ENCODE measurements at regions of chr21 and their contacts with region 1.

Region 1: DNA sequence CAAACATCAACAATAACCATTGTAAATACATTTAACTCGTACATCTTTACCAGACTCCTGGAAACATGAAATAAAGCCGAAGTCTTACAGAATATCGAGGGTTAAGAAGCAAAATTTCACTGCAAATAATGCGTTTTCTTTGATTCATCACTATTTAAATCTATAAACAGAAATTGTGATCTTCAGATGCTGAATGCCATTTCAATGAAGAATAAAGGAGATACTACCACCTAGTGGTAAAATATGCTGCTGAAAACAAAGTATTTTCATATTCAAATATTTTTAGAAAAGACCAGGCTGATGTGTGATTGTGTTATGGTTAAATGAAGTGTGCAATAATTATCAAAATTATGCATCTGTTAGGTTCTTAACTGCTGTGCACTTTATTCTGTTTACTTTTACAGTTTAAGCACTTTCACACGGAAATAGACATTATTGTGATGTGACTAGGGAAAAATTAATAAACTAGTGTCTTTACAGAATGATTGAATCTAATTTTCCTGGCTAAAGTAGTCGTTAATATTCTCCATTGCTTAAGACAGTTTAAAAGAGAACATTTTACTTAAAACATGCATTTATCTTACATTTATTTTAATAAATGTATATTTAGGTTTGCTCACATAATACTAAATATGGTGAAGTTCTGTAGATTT is 1093.1 kb downstream of the MRPL39 start:
- DNase-seq: peak; percentile 57
- ATAC-seq: no peak
- H3K4me3 ChIP-seq: no peak overlapping the region
- H3K27ac ChIP-seq: no peak overlapping the region
- H3K4me1 ChIP-seq: no peaks in the 10 kb centered on the region
- H3K27me3 ChIP-seq: no peaks in the 10 kb centered on the region
- CTCF ChIP-seq: peak; percentile 88

Region 2: GRCh38 chr21:23936224-23936623 is 578.0 kb before region 1 on chr21:
- CTCF ChIA-PET with region 1: no interaction called
- POLR2A ChIA-PET with region 1: no interaction called
- intact Hi-C with region 1: loop called (anchors 10 kb)
- DNase-seq: peak; percentile 53
- ATAC-seq: peak; percentile 81
- H3K4me3 ChIP-seq: no peak overlapping the region
- H3K27ac ChIP-seq: no peak overlapping the region
- H3K4me1 ChIP-seq: no peaks in the 10 kb centered on the region; the same call in 1 of the 2 replicates
- H3K27me3 ChIP-seq: no peaks in the 10 kb centered on the region
- CTCF ChIP-seq: peak; percentile 75

Region 3: DNA sequence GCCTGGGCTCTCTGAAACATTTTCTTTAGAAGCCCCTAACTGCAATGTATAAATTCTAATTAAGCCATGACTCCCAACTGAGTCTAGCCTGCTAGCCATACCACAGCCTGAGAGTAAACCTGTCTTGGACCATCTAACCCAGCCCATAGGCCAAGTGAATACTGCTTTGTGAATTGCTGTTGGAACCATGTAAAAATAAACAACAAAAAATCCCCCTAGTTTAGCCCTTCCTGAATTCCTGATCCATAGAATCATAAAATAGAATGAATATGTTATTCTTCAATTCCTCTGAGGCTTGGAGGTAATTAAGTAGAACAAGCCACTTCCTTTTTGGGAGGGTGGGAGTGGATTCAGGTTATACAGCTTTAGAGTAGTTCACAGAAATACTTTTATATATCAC is 403.4 kb before region 1 on chr21:
- CTCF ChIA-PET with region 1: no interaction called
- POLR2A ChIA-PET with region 1: no interaction called
- intact Hi-C with region 1: loop called (anchors 1 kb)
- DNase-seq: peak; percentile 9
- ATAC-seq: peak; percentile 37; the same call in 1 of the 2 replicates
- H3K4me3 ChIP-seq: no peak overlapping the region
- H3K27ac ChIP-seq: no peak overlapping the region
- H3K4me1 ChIP-seq: no peaks in the 10 kb centered on the region
- H3K27me3 ChIP-seq: no peaks in the 10 kb centered on the region
- CTCF ChIP-seq: no peak

Region 4: DNA sequence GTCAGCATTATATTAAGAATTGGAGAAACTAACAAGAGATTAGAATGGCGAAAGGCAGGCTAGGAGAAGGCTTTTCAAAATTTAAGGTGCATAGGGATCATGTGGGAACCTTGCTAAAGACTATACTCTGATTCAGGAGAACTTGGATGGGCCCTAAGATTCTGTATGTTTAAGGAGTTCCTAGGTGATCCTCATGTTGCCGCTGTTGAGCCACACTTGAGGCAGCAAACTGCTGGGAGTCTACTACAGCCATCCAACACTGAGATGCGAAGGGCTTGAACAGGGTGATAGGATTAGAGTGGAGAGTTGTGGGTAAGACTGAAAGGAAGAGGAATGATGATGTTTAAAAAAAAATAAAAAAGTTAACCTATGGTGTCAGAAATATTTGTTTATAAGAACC is 79.9 kb after region 1 on chr21:
- CTCF ChIA-PET with region 1: no interaction called
- POLR2A ChIA-PET with region 1: no interaction called
- intact Hi-C with region 1: no loop called
- DNase-seq: no peak
- ATAC-seq: no peak
- H3K4me3 ChIP-seq: no peak overlapping the region
- H3K27ac ChIP-seq: no peak overlapping the region
- H3K4me1 ChIP-seq: no peaks in the 10 kb centered on the region
- H3K27me3 ChIP-seq: no peaks in the 10 kb centered on the region
- CTCF ChIP-seq: no peak; the same call in 1 of the 2 replicates

Region 5: DNA sequence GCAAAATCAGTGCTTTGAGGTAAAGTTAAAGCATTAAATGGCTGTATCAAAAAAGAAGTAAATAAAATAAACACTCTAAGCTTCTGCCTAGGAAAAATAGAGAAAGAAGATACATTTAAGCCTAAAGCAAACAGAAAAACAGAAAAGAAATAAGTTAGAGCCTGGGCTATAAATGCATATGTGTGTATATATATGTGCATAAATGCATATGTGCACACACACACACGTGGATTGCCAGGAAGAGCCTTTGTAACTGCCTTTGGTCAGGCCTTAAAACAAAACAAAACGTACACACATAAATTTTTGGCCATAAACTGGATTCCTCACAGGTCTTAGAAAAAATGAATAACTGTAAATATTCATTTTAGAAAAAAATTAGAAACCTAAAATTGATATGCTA is 167.2 kb after region 1 on chr21:
- CTCF ChIA-PET with region 1: no interaction called
- POLR2A ChIA-PET with region 1: no interaction called
- intact Hi-C with region 1: loop called (anchors 10 kb)
- DNase-seq: no peak
- ATAC-seq: no peak
- H3K4me3 ChIP-seq: no peak overlapping the region
- H3K27ac ChIP-seq: no peak overlapping the region
- H3K4me1 ChIP-seq: no peaks in the 10 kb centered on the region
- H3K27me3 ChIP-seq: no peaks in the 10 kb centered on the region
- CTCF ChIP-seq: no peak

Region 6: DNA sequence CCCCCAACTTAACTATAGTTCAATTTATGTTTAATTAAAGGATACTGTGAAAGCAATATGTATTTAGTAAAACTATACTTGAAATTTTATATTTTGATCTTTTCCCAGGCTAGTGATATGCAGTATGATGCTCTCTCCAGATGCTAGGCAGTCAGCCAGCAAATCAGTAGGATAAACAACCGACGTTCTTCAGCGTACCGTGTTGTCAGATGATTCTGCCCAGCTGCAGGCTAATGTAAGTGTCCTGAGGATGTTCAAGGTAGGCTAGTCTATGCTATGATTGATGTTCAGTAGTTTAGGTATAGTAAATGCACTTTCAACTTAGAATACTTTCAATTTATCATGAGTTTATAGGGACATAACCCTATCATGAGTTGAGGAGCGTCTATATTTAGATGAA is 330.5 kb after region 1 on chr21:
- CTCF ChIA-PET with region 1: no interaction called
- POLR2A ChIA-PET with region 1: no interaction called
- intact Hi-C with region 1: no loop called
- DNase-seq: no peak
- ATAC-seq: no peak
- H3K4me3 ChIP-seq: no peak overlapping the region
- H3K27ac ChIP-seq: no peak overlapping the region
- H3K4me1 ChIP-seq: no peaks in the 10 kb centered on the region
- H3K27me3 ChIP-seq: no peaks in the 10 kb centered on the region
- CTCF ChIP-seq: no peak

Region 7: GRCh38 chr21:25298512-25299491 is 784.6 kb after region 1 on chr21:
- CTCF ChIA-PET with region 1: no interaction called
- POLR2A ChIA-PET with region 1: no interaction called
- intact Hi-C with region 1: no loop called
- DNase-seq: no peak
- ATAC-seq: no peak
- H3K4me3 ChIP-seq: no peak overlapping the region
- H3K27ac ChIP-seq: no peak overlapping the region
- H3K4me1 ChIP-seq: no peaks in the 10 kb centered on the region
- H3K27me3 ChIP-seq: no peaks in the 10 kb centered on the region
- CTCF ChIP-seq: no peak

Measured in PC-3 (cell line).